PC-3 (cell line): ENCODE measurements at regions of chr1 and their contacts with region 1.

Region 1: GRCh38 chr1:67735806-67736627 is 51.0 kb downstream of the GADD45A start:
- DNase-seq: peak; percentile 61
- ATAC-seq: peak; percentile 86
- H3K4me3 ChIP-seq: no peak overlapping the region
- H3K27ac ChIP-seq: peak overlapping the region; percentile 42
- H3K4me1 ChIP-seq: peaks cover 14% of the 10 kb centered on the region
- H3K27me3 ChIP-seq: no peaks in the 10 kb centered on the region
- CTCF ChIP-seq: no peak

Region 2: GRCh38 chr1:67700692-67701410 is 35.2 kb before region 1 on chr1:
- CTCF ChIA-PET with region 1: interaction called, 11 read pairs
- POLR2A ChIA-PET with region 1: no interaction called
- intact Hi-C with region 1: no loop called
- DNase-seq: peak; percentile 78
- ATAC-seq: peak; percentile 76
- H3K4me3 ChIP-seq: no peak overlapping the region
- H3K27ac ChIP-seq: peak overlapping the region; percentile 43
- H3K4me1 ChIP-seq: peaks cover 19% of the 10 kb centered on the region
- H3K27me3 ChIP-seq: no peaks in the 10 kb centered on the region
- CTCF ChIP-seq: peak; percentile 37; the same call in 1 of the 2 replicates